H1 (cell line): ENCODE measurements at regions of chr11 and their contacts with region 1.

Region 1: DNA sequence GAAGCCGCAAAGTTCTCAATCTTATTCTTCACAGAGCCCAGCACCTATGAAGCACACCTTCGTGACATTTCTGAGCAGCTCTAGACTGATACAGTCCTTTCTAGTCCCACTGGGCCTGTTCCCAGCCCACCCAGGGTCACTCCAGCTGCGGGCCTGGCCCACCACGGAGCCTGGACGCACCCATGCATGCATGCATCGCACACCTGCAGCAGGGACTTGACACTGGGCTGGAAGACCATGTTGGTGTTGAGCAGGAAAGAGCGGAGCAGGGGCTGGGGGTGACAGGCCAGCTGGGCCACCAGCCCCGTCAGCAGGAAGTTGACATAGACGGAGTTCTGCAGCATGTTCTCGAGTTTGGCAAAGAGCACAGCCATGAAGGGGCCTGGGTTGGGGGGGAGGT is 9.2 kb downstream of the C11orf42 start:
- DNase-seq: no peak
- H3K4me3 ChIP-seq: no peak overlapping the region
- H3K27ac ChIP-seq: no peak overlapping the region
- H3K4me1 ChIP-seq: no peaks in the 10 kb centered on the region
- H3K27me3 ChIP-seq: no peaks in the 10 kb centered on the region
- CTCF ChIP-seq: no peak
- EP300 ChIP-seq: no peak
- POLR2A ChIP-seq: no peak
- RAD21 ChIP-seq: no peak

Region 2: GRCh38 chr11:6151117-6151516 is 63.4 kb before region 1 on chr11:
- CTCF ChIA-PET with region 1: no interaction called
- POLR2A ChIA-PET with region 1: no interaction called
- DNase-seq: no peak
- H3K4me3 ChIP-seq: no peak overlapping the region
- H3K27ac ChIP-seq: no peak overlapping the region
- H3K4me1 ChIP-seq: no peaks in the 10 kb centered on the region
- H3K27me3 ChIP-seq: no peaks in the 10 kb centered on the region; a peak in 1 of 7 replicates
- CTCF ChIP-seq: no peak
- EP300 ChIP-seq: no peak
- POLR2A ChIP-seq: no peak
- RAD21 ChIP-seq: no peak

Region 3: GRCh38 chr11:6191742-6192141 is 22.8 kb before region 1 on chr11:
- CTCF ChIA-PET with region 1: no interaction called
- POLR2A ChIA-PET with region 1: no interaction called
- DNase-seq: no peak
- H3K4me3 ChIP-seq: no peak overlapping the region
- H3K27ac ChIP-seq: no peak overlapping the region
- H3K4me1 ChIP-seq: no peaks in the 10 kb centered on the region
- H3K27me3 ChIP-seq: no peaks in the 10 kb centered on the region
- CTCF ChIP-seq: no peak
- EP300 ChIP-seq: no peak
- POLR2A ChIP-seq: no peak
- RAD21 ChIP-seq: no peak

Region 4: GRCh38 chr11:6203327-6203726 is 11.2 kb before region 1 on chr11:
- CTCF ChIA-PET with region 1: interaction called, 11 read pairs
- POLR2A ChIA-PET with region 1: interaction called, 3 read pairs
- DNase-seq: no peak
- H3K4me3 ChIP-seq: no peak overlapping the region
- H3K27ac ChIP-seq: no peak overlapping the region
- H3K4me1 ChIP-seq: peaks cover 0 to 3% (median 1%) of the 10 kb centered on the region in 4 experiments; a peak in 2 of 7 replicates
- H3K27me3 ChIP-seq: no peaks in the 10 kb centered on the region
- CTCF ChIP-seq: no peak
- EP300 ChIP-seq: no peak
- POLR2A ChIP-seq: no peak
- RAD21 ChIP-seq: no peak

Region 5: DNA sequence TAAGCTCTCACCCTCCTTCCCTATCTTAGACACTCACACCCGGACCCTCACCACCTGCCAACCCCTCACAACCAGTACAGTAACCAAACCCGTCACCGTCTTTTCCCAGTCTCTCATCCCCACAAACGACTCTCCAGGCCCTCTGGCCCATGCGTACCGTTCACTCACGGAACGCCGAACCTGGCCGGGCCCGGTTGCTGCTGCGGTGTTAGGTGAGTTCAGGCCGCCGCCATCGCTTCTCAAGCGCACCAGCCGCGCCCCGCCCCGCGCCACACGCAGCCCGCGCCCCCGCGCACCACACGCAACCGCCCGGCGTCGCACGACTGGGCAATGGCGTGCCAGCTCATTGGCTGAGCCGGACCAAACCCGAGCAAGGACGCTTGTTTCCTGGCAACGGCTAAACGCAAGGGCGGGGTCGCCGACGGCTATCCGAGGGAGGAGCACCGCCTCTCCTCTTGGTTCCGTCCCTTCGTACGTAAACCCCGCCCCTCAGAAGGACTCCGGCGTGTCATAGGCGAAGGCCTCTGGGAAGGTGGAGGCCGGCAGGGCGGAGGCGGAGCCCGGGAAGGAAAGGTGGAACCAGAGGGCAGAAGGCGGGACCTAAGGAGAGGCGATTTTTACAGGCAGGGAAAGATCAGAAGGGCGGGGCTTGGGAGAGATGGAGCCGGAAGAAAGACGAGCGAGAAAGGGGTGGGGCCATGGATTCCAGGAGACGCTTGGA is 20.0 kb after region 1 on chr11 and contains the start of gene FHIP1B:
- CTCF ChIA-PET with region 1: interaction called, 14 read pairs
- POLR2A ChIA-PET with region 1: no interaction called
- DNase-seq: peak; percentile 97 to 100
- H3K4me3 ChIP-seq: peak within 1 kb of the TSS; percentile 88 to 98 (median 94)
- H3K27ac ChIP-seq: peak within 1 kb of the TSS; percentile 61
- H3K4me1 ChIP-seq: peaks cover 0 to 5% (median 2%) of the 10 kb centered on the region in 4 experiments; a peak in 2 of 7 replicates
- H3K27me3 ChIP-seq: 0 out of 7 replicates have a peak, but pooled peaks cover 0 to 2% (median 0%) of the 10 kb centered on the region in 4 experiments
- CTCF ChIP-seq: no peak
- EP300 ChIP-seq: no peak
- POLR2A ChIP-seq: no peak
- RAD21 ChIP-seq: no peak
- total RNA-seq, gene FHIP1B: 16.8 TPM in 2 replicates